ENCODE measurements at regions of chr5 and their contacts with region 1.

Region 1: GRCh38 chr5:43040287-43041098 is at the start of gene ANXA2R:
- DNase-seq: peak; percentile 62
- H3K4me3 ChIP-seq: peak within 1 kb of the TSS; percentile 58 to 72
- H3K27ac ChIP-seq: peak within 1 kb of the TSS; percentile 77 to 93; a peak in 3 of 4 replicates
- H3K4me1 ChIP-seq: peaks cover 0 to 24% of the 10 kb centered on the region in 2 experiments; a peak in 1 of 4 replicates
- H3K27me3 ChIP-seq: no peaks in the 10 kb centered on the region
- CTCF ChIP-seq: peak; percentile 70
- EP300 ChIP-seq: no peak
- RAD21 ChIP-seq: peak; percentile 72
- polyA plus RNA-seq, gene ANXA2R: 1.7 and 1.9 TPM in 2 replicates

Region 2: GRCh38 chr5:42908509-42909488 is 131.7 kb before region 1 on chr5:
- CTCF ChIA-PET with region 1: interaction called, 13 read pairs
- POLR2A ChIA-PET with region 1: no interaction called
- DNase-seq: peak; percentile 76
- H3K4me3 ChIP-seq: peak overlapping the region; percentile 45 to 47
- H3K27ac ChIP-seq: no peak overlapping the region
- H3K4me1 ChIP-seq: peaks cover 0 to 3% of the 10 kb centered on the region in 2 experiments; a peak in 1 of 4 replicates
- H3K27me3 ChIP-seq: peaks cover 23% of the 10 kb centered on the region; the same call in 1 of the 2 replicates
- CTCF ChIP-seq: peak; percentile 74
- EP300 ChIP-seq: no peak
- RAD21 ChIP-seq: peak; percentile 55

Region 3: GRCh38 chr5:42994246-42995151 is 46.0 kb before region 1 on chr5:
- CTCF ChIA-PET with region 1: interaction called, 41 read pairs
- POLR2A ChIA-PET with region 1: no interaction called
- DNase-seq: peak; percentile 74
- H3K4me3 ChIP-seq: peak overlapping the region; percentile 45 to 65
- H3K27ac ChIP-seq: peak overlapping the region; percentile 64 to 85; a peak in 3 of 4 replicates
- H3K4me1 ChIP-seq: peaks cover 0 to 3% of the 10 kb centered on the region in 2 experiments; a peak in 1 of 4 replicates
- H3K27me3 ChIP-seq: peaks cover 48% of the 10 kb centered on the region; the same call in 1 of the 2 replicates
- CTCF ChIP-seq: peak; percentile 73
- EP300 ChIP-seq: no peak
- RAD21 ChIP-seq: peak; percentile 65

Region 4: DNA sequence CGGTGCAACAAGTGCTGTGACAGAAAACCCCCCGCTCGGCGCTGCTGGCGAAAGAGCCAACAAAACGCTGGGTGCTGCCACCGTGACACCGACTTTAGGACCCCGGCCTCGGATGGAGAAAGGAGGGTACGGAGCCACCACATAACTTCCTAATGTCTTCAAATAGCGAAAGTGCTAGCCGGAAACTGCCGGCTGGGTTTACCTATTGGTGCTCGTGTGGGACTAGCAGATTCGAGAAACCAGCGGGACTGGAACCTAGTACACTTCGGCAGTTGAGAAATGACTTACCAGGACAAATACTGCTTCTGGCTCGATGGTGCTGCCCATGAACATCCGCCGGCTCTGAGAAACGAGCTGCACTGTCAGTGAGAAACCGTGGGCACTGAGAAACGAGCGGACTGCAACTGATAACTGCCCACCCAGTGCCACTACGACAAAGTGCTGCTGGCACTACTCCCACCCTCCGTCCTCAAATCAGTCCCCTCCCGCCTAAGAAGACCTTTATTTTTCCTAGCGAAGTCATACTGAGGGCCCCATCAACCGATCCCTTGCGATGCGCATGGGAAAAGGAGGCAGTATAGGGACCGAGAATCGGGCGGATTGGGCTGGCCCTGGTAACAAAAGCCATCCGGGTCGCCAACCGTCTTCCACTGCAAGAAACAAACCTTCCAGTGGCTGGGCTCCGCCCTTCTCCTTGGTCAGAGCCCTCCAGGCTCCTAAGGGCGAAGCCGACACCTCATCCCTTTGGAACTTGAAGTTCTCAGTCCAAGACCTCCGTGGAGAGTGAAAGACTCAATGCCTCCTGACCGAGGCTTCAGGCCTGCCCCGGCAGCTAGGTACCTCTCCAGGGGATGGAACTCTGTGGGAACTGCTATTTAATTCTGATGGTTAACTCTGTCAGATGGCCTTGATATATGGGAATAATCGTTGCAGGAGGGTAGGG is 26.6 kb after region 1 on chr5:
- CTCF ChIA-PET with region 1: interaction called, 21 read pairs
- POLR2A ChIA-PET with region 1: no interaction called
- DNase-seq: peak; percentile 68
- H3K4me3 ChIP-seq: peak overlapping the region; percentile 80 to 84
- H3K27ac ChIP-seq: peak overlapping the region; percentile 90 to 97
- H3K4me1 ChIP-seq: peaks cover 11 to 13% of the 10 kb centered on the region in 2 experiments; a peak in 3 of 4 replicates
- H3K27me3 ChIP-seq: no peaks in the 10 kb centered on the region
- CTCF ChIP-seq: no peak
- EP300 ChIP-seq: peak; percentile 83 to 97; a peak in 3 of 4 replicates
- RAD21 ChIP-seq: no peak

Region 5: GRCh38 chr5:43215073-43215631 is 174.7 kb after region 1 on chr5:
- CTCF ChIA-PET with region 1: no interaction called
- POLR2A ChIA-PET with region 1: no interaction called
- DNase-seq: no peak
- H3K4me3 ChIP-seq: no peak overlapping the region
- H3K27ac ChIP-seq: no peak overlapping the region
- H3K4me1 ChIP-seq: no peaks in the 10 kb centered on the region
- H3K27me3 ChIP-seq: peaks cover 3% of the 10 kb centered on the region; the same call in 1 of the 2 replicates
- CTCF ChIP-seq: no peak
- EP300 ChIP-seq: no peak
- RAD21 ChIP-seq: no peak

Measured in SK-N-SH (cell line).